Body of pancreas (tissue), 4 donors: ENCODE measurements at regions of chr5 and their contacts with region 1.

Region 1: DNA sequence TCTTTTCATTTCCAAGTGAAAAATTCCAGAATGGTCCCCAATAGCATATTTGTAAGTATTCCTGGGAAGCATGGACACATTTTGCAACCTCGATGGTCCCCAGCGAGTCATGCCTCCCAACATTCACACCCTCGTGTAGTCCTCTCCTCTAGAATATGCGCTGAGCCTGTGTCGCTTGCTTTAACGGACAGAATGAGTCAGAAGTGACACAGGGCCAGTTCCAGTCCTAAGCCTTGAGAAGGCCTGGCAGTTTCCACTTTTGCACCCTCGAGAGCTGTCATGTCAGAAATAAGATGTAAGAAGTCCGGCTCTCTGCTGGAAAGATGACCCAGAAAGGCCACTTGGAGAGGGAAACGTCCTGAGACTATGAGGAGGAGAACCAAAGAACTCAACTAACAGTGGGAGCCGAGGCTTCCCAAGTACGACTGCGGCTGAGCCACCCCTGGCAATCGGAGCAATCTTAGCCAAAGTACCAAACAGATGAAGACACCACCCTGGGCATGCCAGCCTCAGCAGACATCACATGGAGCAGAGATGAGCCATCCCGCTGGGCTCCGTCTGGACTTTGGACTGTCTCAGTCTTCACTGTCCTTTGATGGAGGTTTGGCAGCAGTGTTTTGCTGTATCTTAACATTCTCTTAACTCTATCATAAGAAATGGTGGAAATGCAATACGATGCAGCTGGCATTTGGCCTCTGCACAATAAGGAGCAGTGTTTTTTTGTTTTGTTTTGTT is 42.6 kb upstream of the GFPT2 start:
- DNase-seq: no peak
- ATAC-seq: no peak
- H3K4me3 ChIP-seq: no peak overlapping the region
- H3K27ac ChIP-seq: no peak overlapping the region
- H3K4me1 ChIP-seq: no peaks in the 10 kb centered on the region
- H3K27me3 ChIP-seq: no peaks in the 10 kb centered on the region
- CTCF ChIP-seq: no peak
- POLR2A ChIP-seq: no peak

Region 2: GRCh38 chr5:180155365-180155926 is 240.3 kb before region 1 on chr5:
- intact Hi-C with region 1: no loop called
- DNase-seq: no peak
- ATAC-seq: no peak
- H3K4me3 ChIP-seq: no peak overlapping the region
- H3K27ac ChIP-seq: no peak overlapping the region
- H3K4me1 ChIP-seq: no peaks in the 10 kb centered on the region
- H3K27me3 ChIP-seq: no peaks in the 10 kb centered on the region
- CTCF ChIP-seq: no peak
- POLR2A ChIP-seq: no peak

Region 3: DNA sequence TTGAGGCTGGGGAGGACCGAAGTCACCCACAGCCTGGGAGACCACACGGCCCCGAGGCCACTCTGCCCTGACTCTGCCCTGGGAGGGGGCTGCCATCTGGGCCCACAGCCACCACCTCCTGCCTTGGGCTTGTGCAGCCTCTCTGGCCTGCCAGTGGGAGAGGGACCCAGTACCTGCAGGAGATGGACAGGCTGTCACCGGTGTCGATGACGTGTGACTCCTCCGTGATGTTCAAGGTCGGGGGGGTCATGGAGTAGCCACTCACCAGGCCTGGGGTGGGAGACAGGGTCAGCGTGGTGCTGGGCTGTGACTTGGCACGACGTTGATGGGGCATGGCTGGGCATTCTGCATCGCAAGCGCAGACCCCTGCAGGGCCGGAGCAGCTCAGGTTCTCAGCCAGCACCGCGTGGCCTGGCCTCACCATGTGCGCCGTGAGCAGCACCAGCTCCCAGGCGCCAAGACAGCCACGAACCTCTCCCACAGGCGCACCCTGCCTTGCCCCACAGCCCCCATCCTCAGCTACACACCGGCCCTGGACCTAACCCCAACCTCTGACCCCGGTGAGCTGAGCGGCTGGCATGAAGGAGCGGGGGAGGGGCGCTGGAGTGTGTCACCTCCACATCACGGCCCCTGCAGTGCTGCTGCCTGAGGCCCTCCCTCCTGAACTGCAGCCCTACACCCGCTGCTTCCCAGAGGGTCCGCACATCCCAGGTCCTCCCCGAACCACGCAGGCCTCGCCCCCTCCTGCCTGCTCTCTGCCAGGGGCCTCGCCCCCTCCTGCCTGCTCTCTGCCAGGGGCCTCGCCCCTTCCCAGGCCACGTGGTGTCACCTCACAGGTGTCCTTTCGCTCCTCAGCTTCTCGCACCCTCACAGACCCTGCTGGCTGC is 236.0 kb after region 1 on chr5:
- intact Hi-C with region 1: loop called (anchors 5 kb)
- DNase-seq: peak in 1 of 4 donors; percentile 9
- ATAC-seq: no peak
- H3K4me3 ChIP-seq: no peak overlapping the region
- H3K27ac ChIP-seq: no peak overlapping the region
- H3K4me1 ChIP-seq: no peaks in the 10 kb centered on the region
- H3K27me3 ChIP-seq: no peaks in the 10 kb centered on the region
- CTCF ChIP-seq: no peak
- POLR2A ChIP-seq: no peak